Gastrocnemius medialis (tissue), 4 donors: ENCODE measurements at regions of chr12 and their contacts with region 1.

Region 1: DNA sequence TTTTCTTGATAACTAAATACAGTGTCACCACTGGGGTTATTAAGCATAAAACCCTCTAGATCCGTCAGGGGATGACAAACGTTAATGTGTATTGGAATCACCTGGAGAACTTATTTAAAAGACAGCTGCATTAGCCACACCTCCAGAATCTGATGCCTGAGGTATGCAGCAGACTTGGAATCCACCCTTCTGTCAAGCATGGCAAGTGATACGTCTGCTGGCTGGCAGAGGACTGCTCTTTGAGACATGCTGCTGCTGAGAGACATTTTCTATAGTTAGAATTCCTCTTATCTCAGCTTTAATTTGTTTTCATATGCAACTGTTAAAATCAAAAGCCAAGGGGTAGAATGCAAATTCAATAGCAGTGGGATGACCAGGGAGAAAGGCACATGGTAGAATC is 496.3 kb downstream of the NELL2 start:
- DNase-seq: no peak
- ATAC-seq: peak in 1 of 2 donors; percentile 41
- H3K4me3 ChIP-seq: no peak overlapping the region
- H3K27ac ChIP-seq: no peak overlapping the region
- H3K4me1 ChIP-seq: peaks cover 9 to 13% of the 10 kb centered on the region in 2 donors
- H3K27me3 ChIP-seq: no peaks in the 10 kb centered on the region
- CTCF ChIP-seq: no peak
- POLR2A ChIP-seq: no peak

Region 2: DNA sequence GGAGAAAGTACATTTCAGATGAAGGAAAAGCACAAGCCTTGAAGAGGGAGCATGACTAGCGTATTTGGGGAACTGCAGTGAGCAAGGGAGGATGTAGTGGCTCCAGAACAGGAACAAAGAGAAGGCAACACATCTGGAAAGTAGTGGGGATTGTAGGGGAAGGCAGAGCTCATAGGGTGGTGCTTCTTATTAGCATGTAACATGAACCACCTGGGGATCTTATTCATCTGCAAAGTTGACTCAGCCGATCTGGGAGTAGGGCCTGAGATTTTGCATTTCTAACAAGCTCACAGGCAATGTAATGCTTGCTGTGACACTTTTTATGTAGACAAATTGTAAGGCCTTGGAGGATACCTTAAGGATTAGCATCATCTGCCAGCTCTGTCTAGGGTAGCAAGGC is 49.0 kb after region 1 on chr12:
- in situ Hi-C with region 1: no loop called
- intact Hi-C with region 1: loop called (anchors 1 kb)
- DNase-seq: no peak
- ATAC-seq: no peak
- H3K4me3 ChIP-seq: no peak overlapping the region
- H3K27ac ChIP-seq: no peak overlapping the region
- H3K4me1 ChIP-seq: no peaks in the 10 kb centered on the region
- H3K27me3 ChIP-seq: no peaks in the 10 kb centered on the region
- CTCF ChIP-seq: no peak
- POLR2A ChIP-seq: no peak